Activated B cell treated with CpG ODN at 0.5 μM for 24 hours (primary cell): ENCODE measurements at regions of chr1 and their contacts with region 1.

Region 1: GRCh38 chr1:200971955-200972711 is 51.4 kb downstream of the KIF21B start:
- DNase-seq: peak; percentile 59
- ATAC-seq: peak; percentile 53
- H3K4me3 Mint-ChIP-seq: no peak overlapping the region
- H3K27ac Mint-ChIP-seq: no peak overlapping the region
- H3K4me1 Mint-ChIP-seq: peaks cover 10% of the 10 kb centered on the region
- H3K27me3 Mint-ChIP-seq: no peaks in the 10 kb centered on the region
- CTCF ChIP-seq: peak; percentile 100

Region 2: GRCh38 chr1:200558866-200559459 is 413.2 kb before region 1 on chr1:
- CTCF ChIA-PET with region 1: interaction called, 4 read pairs
- POLR2A ChIA-PET with region 1: no interaction called
- intact Hi-C with region 1: loop called (anchors 5 kb)
- DNase-seq: no peak
- ATAC-seq: no peak
- H3K4me3 Mint-ChIP-seq: no peak overlapping the region
- H3K27ac Mint-ChIP-seq: no peak overlapping the region
- H3K4me1 Mint-ChIP-seq: peaks cover 4% of the 10 kb centered on the region
- H3K27me3 Mint-ChIP-seq: no peaks in the 10 kb centered on the region
- CTCF ChIP-seq: peak; percentile 57

Region 3: GRCh38 chr1:200866521-200866920 is 105.6 kb before region 1 on chr1:
- CTCF ChIA-PET with region 1: no interaction called
- POLR2A ChIA-PET with region 1: no interaction called
- intact Hi-C with region 1: loop called (anchors 5 kb)
- DNase-seq: no peak
- ATAC-seq: peak; percentile 67
- H3K4me3 Mint-ChIP-seq: no peak overlapping the region
- H3K27ac Mint-ChIP-seq: no peak overlapping the region
- H3K4me1 Mint-ChIP-seq: peaks cover 64% of the 10 kb centered on the region
- H3K27me3 Mint-ChIP-seq: peaks cover 3% of the 10 kb centered on the region
- CTCF ChIP-seq: no peak

Region 4: GRCh38 chr1:201114236-201115131 is 142.4 kb after region 1 on chr1:
- CTCF ChIA-PET with region 1: interaction called, 38 read pairs
- POLR2A ChIA-PET with region 1: interaction called, 3 read pairs
- intact Hi-C with region 1: loop called (anchors 1 kb)
- DNase-seq: peak; percentile 61
- ATAC-seq: peak; percentile 88
- H3K4me3 Mint-ChIP-seq: peak overlapping the region; percentile 82
- H3K27ac Mint-ChIP-seq: no peak overlapping the region
- H3K4me1 Mint-ChIP-seq: peaks cover 2% of the 10 kb centered on the region
- H3K27me3 Mint-ChIP-seq: peaks cover 12% of the 10 kb centered on the region
- CTCF ChIP-seq: peak; percentile 18

Region 5: DNA sequence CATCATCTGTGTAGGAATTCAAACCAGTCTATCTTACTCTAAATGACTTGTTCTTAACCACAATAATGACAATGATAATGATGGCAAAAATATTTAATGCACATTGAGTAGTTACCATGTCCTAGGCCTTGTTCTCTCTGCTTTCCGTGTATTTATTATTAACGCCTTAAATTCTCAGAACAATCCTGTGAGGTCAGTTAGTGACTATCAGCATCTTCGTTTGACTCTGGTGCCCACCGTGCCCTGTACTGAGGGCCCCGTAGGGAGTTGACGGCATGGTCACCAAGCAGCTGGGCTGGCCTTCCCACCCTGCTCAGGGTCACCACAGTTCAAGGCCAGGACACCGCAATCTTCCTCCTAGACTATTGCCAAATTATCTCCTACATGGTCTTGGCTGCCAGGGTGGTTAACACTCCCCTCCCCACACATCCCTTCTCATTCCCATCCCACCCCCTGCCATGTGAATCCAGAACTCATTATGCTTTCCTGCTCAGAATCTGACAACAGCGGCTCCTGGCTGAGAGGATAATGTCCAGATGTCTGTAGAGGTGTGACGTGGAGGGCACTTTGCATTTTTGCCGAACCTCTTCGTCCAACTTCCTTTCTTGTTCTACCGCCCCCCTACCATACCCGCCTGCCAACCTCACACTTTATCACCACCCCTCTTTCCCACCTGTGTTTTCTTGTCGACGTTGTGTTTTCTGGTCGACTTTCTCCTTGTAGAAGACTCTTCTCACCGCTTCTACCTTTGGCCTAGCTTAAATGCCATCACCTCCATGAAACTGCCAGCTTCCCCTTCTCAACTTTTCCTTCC is 251.9 kb after region 1 on chr1:
- CTCF ChIA-PET with region 1: interaction called, 3 read pairs
- POLR2A ChIA-PET with region 1: no interaction called
- intact Hi-C with region 1: loop called (anchors 1 kb)
- DNase-seq: no peak
- ATAC-seq: no peak
- H3K4me3 Mint-ChIP-seq: no peak overlapping the region
- H3K27ac Mint-ChIP-seq: no peak overlapping the region
- H3K4me1 Mint-ChIP-seq: no peaks in the 10 kb centered on the region
- H3K27me3 Mint-ChIP-seq: peaks cover 4% of the 10 kb centered on the region
- CTCF ChIP-seq: no peak

Region 6: GRCh38 chr1:201937624-201938213 is 965.6 kb after region 1 on chr1:
- CTCF ChIA-PET with region 1: no interaction called
- POLR2A ChIA-PET with region 1: no interaction called
- intact Hi-C with region 1: no loop called
- DNase-seq: no peak
- ATAC-seq: no peak
- H3K4me3 Mint-ChIP-seq: no peak overlapping the region
- H3K27ac Mint-ChIP-seq: no peak overlapping the region
- H3K4me1 Mint-ChIP-seq: no peaks in the 10 kb centered on the region
- H3K27me3 Mint-ChIP-seq: peaks cover 12% of the 10 kb centered on the region
- CTCF ChIP-seq: no peak